ENCODE measurements at regions of chr19 and their contacts with region 1.

Region 1: DNA sequence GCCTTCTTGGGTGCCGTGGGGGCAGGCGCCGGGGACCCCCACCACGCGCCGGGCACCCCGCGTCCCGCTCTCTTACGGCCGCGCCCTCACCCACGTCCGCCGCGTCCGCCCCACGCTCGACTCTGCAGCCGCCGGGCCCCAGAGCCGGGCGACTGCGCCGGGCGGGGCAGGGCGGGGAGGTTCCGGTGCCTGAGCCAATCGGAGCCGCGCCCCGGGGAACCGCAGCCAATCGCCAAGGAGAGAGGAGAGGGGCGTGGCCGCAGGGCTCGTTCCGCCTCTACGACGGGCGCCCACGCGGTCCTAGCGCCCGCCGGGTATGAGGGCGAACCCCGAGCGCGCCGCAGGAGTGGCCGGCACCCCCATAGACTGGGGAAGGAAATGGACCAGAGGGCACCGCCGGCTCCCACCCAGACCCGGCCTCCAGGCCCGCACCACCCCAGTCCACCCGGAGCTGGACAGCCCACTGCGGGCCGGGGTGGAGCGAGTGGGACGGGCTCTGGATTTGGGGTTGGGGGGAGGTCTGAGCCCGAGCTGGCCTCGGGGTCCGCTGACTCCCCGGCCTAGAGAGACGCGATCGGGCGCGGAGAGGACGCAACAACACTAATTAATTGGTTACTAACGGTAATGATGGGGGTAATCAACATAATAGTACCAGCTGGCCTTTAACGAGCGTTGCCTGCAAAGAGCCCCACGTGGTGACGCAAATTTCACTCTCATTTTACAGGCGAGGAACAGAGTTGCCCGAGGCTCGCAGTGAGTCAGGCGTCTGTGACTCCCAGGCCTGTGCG is at the start of gene MFSD12:
- DNase-seq: peak; percentile 89 to 95 (median 94)
- ATAC-seq: peak; percentile 85 to 86
- H3K4me3 Mint-ChIP-seq: peak within 1 kb of the TSS; percentile 94 to 98 (median 97)
- H3K27ac Mint-ChIP-seq: peak within 1 kb of the TSS; percentile 88 to 98 (median 94)
- H3K4me1 Mint-ChIP-seq: peaks cover 22 to 44% (median 39%) of the 10 kb centered on the region in 4 donors
- H3K27me3 Mint-ChIP-seq: no peaks in the 10 kb centered on the region
- polyA plus RNA-seq, gene MFSD12: 33.1 to 59.6 (median 42.5) TPM

Region 2: GRCh38 chr19:3413796-3414327 is 143.8 kb before region 1 on chr19:
- POLR2A ChIA-PET with region 1: no interaction called
- DNase-seq: no peak
- ATAC-seq: no peak
- H3K4me3 Mint-ChIP-seq: no peak overlapping the region
- H3K27ac Mint-ChIP-seq: peak overlapping the region in 4 of 10 donors; percentile 14 to 34 (median 23)
- H3K4me1 Mint-ChIP-seq: peaks cover 0 to 4% (median under 1%) of the 10 kb centered on the region in 4 donors
- H3K27me3 Mint-ChIP-seq: no peaks in the 10 kb centered on the region

Region 3: DNA sequence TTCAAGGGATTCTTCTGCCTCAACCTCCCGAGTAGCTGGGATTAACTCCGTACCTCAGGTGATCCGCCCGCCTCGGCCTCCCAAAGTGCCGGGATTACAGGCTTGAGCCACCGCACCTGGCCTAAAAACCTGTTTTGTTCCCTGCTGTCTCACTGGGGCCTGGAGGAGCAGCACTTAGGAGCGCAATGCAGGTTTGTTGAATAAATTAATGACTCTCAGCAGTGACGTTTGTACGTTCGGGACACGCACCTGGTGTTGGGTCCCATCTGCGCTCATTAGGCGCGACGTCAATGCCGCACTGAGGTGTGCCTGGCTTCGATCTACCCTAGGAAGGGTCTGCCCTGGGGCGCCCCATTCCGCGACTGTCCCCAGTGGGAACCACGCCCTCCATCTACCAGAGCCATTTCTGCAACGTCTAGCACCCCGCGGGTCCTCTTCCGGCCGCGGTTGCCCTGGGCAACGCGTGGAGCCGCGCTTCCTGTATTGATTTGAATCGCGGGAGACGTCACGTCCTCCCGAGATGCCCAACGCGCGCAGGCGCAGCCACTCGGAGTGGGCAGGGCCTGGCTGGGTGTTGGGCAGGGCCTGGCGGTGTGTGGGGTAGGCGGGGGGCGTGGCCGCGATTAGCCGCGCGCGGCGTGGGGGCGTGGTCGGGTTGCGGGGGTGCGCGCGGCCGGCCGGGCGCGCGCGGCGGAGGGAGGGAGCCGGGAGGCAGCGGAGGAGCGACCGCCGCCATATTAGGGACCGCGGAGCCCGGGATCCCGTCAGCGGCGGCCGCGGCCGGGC is 51.9 kb before region 1 on chr19 and contains the start of gene FZR1:
- POLR2A ChIA-PET with region 1: interaction called, 17 read pairs
- DNase-seq: peak; percentile 95 to 100 (median 100)
- ATAC-seq: peak; percentile 85 to 91
- H3K4me3 Mint-ChIP-seq: peak within 1 kb of the TSS; percentile 80 to 99 (median 94)
- H3K27ac Mint-ChIP-seq: peak within 1 kb of the TSS; percentile 95 to 100 (median 99)
- H3K4me1 Mint-ChIP-seq: peaks cover 23 to 55% (median 47%) of the 10 kb centered on the region in 4 donors
- H3K27me3 Mint-ChIP-seq: no peaks in the 10 kb centered on the region
- polyA plus RNA-seq, gene FZR1: 8.1 to 11.8 (median 9.5) TPM

Region 4: GRCh38 chr19:3544742-3545668 is 12.7 kb before region 1 on chr19:
- POLR2A ChIA-PET with region 1: interaction called, 30 read pairs
- DNase-seq: peak; percentile 52 to 87 (median 74)
- ATAC-seq: peak; percentile 67 to 75
- H3K4me3 Mint-ChIP-seq: no peak overlapping the region
- H3K27ac Mint-ChIP-seq: peak overlapping the region; percentile 43 to 84 (median 77)
- H3K4me1 Mint-ChIP-seq: peaks cover 7 to 21% (median 15%) of the 10 kb centered on the region in 4 donors
- H3K27me3 Mint-ChIP-seq: no peaks in the 10 kb centered on the region

Region 5: GRCh38 chr19:3572132-3572854 is 14.6 kb after region 1 on chr19:
- POLR2A ChIA-PET with region 1: interaction called, 44 read pairs
- DNase-seq: peak; percentile 94 to 100 (median 99)
- ATAC-seq: peak; percentile 96
- H3K4me3 Mint-ChIP-seq: peak overlapping the region; percentile 62 to 92 (median 80)
- H3K27ac Mint-ChIP-seq: peak overlapping the region; percentile 31 to 91 (median 64)
- H3K4me1 Mint-ChIP-seq: peaks cover 8 to 27% (median 18%) of the 10 kb centered on the region in 4 donors
- H3K27me3 Mint-ChIP-seq: no peaks in the 10 kb centered on the region

Region 6: DNA sequence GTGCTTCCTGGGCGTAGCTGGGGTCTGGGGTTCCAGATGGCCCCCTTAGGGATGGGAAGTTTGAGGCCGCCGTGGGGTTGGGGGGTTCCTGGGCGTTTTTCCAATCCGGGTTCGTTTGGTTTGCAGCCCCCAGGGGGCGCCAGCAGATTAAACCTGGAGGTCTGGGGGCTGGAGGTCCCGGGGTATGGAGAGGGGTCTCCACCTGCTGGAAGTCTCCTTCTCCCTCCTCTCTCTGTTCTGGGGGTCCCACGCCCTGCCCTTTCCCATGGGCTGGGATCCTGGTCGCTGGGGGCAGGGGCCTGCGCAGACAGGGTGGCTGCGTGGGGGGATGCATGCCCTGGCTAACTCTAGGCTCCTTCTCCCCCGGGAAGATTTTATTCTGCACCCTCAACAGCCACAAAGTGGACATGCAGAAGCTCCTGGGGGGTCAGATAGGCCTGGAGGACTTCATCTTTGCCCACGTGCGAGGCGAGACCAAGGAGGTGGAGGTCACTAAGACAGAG is 28.5 kb after region 1 on chr19:
- POLR2A ChIA-PET with region 1: interaction called, 17 read pairs
- DNase-seq: peak; percentile 26 to 79 (median 56)
- ATAC-seq: peak; percentile 60 to 72
- H3K4me3 Mint-ChIP-seq: peak overlapping the region; percentile 56 to 79 (median 66)
- H3K27ac Mint-ChIP-seq: peak overlapping the region in 2 of 10 donors; percentile 19 to 43
- H3K4me1 Mint-ChIP-seq: peaks cover 0 to 3% (median 0%) of the 10 kb centered on the region in 4 donors
- H3K27me3 Mint-ChIP-seq: no peaks in the 10 kb centered on the region

Region 7: GRCh38 chr19:3606690-3607289 is 49.1 kb after region 1 on chr19 and contains the start of gene TBXA2R:
- POLR2A ChIA-PET with region 1: interaction called, 22 read pairs
- DNase-seq: peak; percentile 48 to 84 (median 59)
- ATAC-seq: peak; percentile 28 to 54
- H3K4me3 Mint-ChIP-seq: peak within 1 kb of the TSS in 9 of 10 donors; percentile 60 to 91 (median 75)
- H3K27ac Mint-ChIP-seq: peak within 1 kb of the TSS; percentile 49 to 94 (median 82)
- H3K4me1 Mint-ChIP-seq: peaks cover 11 to 33% (median 19%) of the 10 kb centered on the region in 4 donors
- H3K27me3 Mint-ChIP-seq: no peaks in the 10 kb centered on the region
- polyA plus RNA-seq, gene TBXA2R: 11.7 to 26.9 (median 23.9) TPM

Measured in naive thymus-derived CD8-positive, alpha-beta T cell (primary cell).